ENCODE measurements at regions of chr2 and their contacts with region 1.

Region 1: DNA sequence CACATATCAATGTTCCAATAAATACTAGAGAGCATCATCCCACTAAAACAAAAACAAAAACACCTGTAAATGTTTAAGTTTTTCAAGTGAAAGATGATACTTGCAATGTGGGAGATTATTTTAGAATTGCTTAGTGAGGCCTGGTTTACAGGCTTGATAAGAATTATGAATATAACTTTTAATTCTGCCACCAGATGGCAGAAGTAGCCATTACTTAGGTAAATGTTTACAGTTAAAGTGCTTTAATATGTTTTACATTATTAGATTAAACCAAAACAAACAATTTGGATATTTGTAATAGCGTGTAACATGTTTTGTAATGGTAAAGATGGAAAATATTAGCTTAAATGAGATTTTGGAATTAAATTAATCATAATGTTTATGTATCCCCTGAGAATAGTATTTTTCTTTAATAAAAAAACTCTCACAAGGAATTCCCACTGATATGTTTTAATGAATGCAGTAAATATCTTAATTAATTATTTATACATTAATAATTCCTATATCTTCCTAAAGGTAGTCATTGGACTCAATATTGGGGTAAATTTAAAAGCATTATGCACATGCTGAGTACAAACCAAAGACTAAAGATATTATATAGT is 522.0 kb downstream of the SPAG16 start:
- DNase-seq: no peak
- H3K4me3 Mint-ChIP-seq: no peak overlapping the region
- H3K27ac Mint-ChIP-seq: no peak overlapping the region
- H3K4me1 Mint-ChIP-seq: no peaks in the 10 kb centered on the region
- H3K27me3 Mint-ChIP-seq: no peaks in the 10 kb centered on the region

Region 2: GRCh38 chr2:213251618-213252017 is 554.6 kb before region 1 on chr2:
- CTCF ChIA-PET with region 1: no interaction called
- POLR2A ChIA-PET with region 1: no interaction called
- intact Hi-C with region 1: loop called (anchors 10 kb)
- DNase-seq: no peak
- H3K4me3 Mint-ChIP-seq: no peak overlapping the region
- H3K27ac Mint-ChIP-seq: no peak overlapping the region
- H3K4me1 Mint-ChIP-seq: no peaks in the 10 kb centered on the region
- H3K27me3 Mint-ChIP-seq: peaks cover 3% of the 10 kb centered on the region

Region 3: DNA sequence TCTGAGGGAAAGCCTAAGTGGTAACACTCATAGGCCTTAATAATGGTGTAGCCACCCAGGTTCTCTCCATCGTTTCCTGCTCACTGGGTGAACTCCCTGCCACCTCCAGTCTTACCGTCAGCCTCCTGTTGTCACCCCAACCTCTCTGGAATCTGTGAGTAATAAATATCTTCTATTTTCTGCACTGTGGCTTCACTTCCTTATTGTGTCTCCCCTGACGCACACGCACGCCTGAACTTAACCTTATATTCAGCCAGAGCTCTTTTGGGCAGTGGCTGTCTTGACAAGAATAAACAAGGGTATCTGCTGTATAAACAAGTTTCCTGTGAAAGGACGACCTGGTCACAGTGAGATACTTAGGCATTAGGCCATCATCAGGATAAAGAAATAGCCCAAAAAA is 54.8 kb before region 1 on chr2:
- CTCF ChIA-PET with region 1: no interaction called
- POLR2A ChIA-PET with region 1: no interaction called
- intact Hi-C with region 1: no loop called
- DNase-seq: no peak
- H3K4me3 Mint-ChIP-seq: no peak overlapping the region
- H3K27ac Mint-ChIP-seq: no peak overlapping the region
- H3K4me1 Mint-ChIP-seq: no peaks in the 10 kb centered on the region
- H3K27me3 Mint-ChIP-seq: no peaks in the 10 kb centered on the region

Region 4: GRCh38 chr2:213862407-213863076 is 56.3 kb after region 1 on chr2:
- CTCF ChIA-PET with region 1: no interaction called
- POLR2A ChIA-PET with region 1: no interaction called
- intact Hi-C with region 1: no loop called
- DNase-seq: no peak
- H3K4me3 Mint-ChIP-seq: no peak overlapping the region
- H3K27ac Mint-ChIP-seq: no peak overlapping the region
- H3K4me1 Mint-ChIP-seq: no peaks in the 10 kb centered on the region
- H3K27me3 Mint-ChIP-seq: no peaks in the 10 kb centered on the region

Region 5: GRCh38 chr2:215002500-215002899 is 1196.3 kb after region 1 on chr2:
- CTCF ChIA-PET with region 1: no interaction called
- POLR2A ChIA-PET with region 1: no interaction called
- intact Hi-C with region 1: loop called (anchors 5 kb)
- DNase-seq: no peak
- H3K4me3 Mint-ChIP-seq: no peak overlapping the region
- H3K27ac Mint-ChIP-seq: no peak overlapping the region
- H3K4me1 Mint-ChIP-seq: no peaks in the 10 kb centered on the region
- H3K27me3 Mint-ChIP-seq: peaks cover 4% of the 10 kb centered on the region

Region 6: GRCh38 chr2:215269397-215270119 is 1463.3 kb after region 1 on chr2:
- CTCF ChIA-PET with region 1: no interaction called
- POLR2A ChIA-PET with region 1: no interaction called
- intact Hi-C with region 1: loop called (anchors 2 kb)
- DNase-seq: peak; percentile 53
- H3K4me3 Mint-ChIP-seq: no peak overlapping the region
- H3K27ac Mint-ChIP-seq: no peak overlapping the region
- H3K4me1 Mint-ChIP-seq: no peaks in the 10 kb centered on the region
- H3K27me3 Mint-ChIP-seq: no peaks in the 10 kb centered on the region